Activated B cell treated with CpG ODN at 0.5 μM for 24 hours (primary cell): ENCODE measurements at regions of chr9 and their contacts with region 1.

Region 1: DNA sequence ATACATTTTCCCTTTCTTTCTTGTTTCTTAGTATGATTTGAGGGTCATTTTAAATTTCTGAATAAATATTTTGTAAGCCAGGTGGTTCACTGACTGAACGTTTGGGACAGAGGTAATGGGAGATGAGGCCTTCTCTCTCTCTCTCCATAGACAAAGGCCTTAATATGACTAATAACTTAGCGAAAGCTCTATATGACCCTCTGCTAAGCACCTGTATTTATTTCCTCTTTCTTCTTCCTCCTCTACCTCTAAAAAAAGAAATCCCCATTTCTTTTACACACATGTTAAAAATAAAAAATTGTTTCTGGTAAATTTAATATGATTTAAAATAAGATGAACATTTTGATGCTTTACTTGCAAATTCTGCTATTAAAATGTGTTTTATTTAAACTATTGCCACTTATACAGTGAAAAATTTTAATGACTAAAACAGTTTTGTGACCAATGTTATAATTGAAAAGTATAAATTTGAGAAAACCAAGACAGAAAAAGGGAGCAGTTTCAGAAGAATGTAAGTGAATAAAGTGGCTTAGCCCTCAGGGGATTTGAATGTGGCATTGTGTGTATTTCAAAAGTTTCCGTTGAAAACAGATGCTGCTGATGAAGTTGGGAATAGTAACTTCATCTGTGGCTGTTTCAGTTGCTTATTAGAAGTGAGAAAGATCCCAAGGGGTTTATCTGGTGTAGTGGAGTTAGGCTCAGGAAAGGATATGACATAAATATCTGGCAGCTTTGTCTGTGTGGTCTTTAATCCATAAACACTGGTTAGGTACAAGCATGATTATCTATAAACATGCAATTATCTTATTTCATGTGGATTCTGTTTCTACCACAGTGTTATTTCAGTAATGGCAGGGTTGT is 128.6 kb upstream of the GRHPR start:
- DNase-seq: no peak
- ATAC-seq: peak; percentile 69
- H3K4me3 Mint-ChIP-seq: peak overlapping the region; percentile 67
- H3K27ac Mint-ChIP-seq: peak overlapping the region; percentile 97
- H3K4me1 Mint-ChIP-seq: peaks cover 95% of the 10 kb centered on the region
- H3K27me3 Mint-ChIP-seq: no peaks in the 10 kb centered on the region
- CTCF ChIP-seq: no peak

Region 2: DNA sequence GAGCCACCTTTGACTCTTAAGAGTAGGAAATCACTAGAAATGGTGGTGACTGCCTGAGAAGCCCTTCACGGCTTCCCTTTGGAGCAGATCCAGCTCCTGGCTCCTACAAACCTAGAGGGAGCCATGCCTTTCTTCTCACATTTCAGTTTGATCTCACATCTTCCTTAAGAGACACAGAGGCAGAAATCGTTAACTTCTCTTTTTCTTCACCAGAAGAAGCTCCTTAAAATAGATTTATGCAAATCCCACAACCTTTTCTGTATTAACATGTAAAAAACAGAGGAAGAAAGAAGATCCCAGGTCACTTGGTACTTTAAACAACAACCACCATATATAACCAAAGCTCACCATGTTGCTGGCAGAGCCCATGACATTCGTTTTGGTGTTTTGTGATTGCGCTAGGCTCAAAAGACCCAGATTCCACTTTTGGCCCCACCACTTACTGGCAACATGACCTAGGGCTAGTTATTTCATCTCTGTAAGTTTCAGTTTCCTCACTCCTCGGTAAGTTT is 289.4 kb before region 1 on chr9:
- CTCF ChIA-PET with region 1: no interaction called
- POLR2A ChIA-PET with region 1: interaction called, 10 read pairs
- intact Hi-C with region 1: no loop called
- DNase-seq: no peak
- ATAC-seq: peak; percentile 37
- H3K4me3 Mint-ChIP-seq: peak overlapping the region; percentile 86
- H3K27ac Mint-ChIP-seq: peak overlapping the region; percentile 84
- H3K4me1 Mint-ChIP-seq: peaks cover 94% of the 10 kb centered on the region
- H3K27me3 Mint-ChIP-seq: no peaks in the 10 kb centered on the region
- CTCF ChIP-seq: no peak

Region 3: DNA sequence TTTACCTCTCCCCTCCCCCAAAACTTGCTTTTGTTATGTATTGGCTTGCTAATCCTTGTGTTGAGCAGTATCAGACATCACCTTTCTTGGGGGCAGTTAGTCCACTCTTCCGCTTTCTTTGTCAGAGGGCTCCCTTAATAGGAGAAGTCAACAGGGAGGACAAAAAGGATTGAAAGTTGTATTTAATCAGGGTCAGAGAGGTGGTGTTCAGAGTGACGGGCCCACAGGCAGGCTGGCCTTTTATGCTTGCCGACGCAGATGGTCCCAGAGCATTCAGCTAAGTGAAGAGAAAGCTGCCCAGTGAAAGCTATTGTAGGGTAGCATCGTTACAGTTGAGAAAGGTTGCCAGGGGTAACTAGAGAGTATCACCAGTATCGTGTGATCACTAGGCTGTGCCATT is 42.4 kb before region 1 on chr9:
- CTCF ChIA-PET with region 1: no interaction called
- POLR2A ChIA-PET with region 1: interaction called, 10 read pairs
- intact Hi-C with region 1: no loop called
- DNase-seq: peak; percentile 31
- ATAC-seq: peak; percentile 93
- H3K4me3 Mint-ChIP-seq: peak overlapping the region; percentile 45
- H3K27ac Mint-ChIP-seq: peak overlapping the region; percentile 94
- H3K4me1 Mint-ChIP-seq: peaks cover 68% of the 10 kb centered on the region
- H3K27me3 Mint-ChIP-seq: no peaks in the 10 kb centered on the region
- CTCF ChIP-seq: no peak

Region 4: DNA sequence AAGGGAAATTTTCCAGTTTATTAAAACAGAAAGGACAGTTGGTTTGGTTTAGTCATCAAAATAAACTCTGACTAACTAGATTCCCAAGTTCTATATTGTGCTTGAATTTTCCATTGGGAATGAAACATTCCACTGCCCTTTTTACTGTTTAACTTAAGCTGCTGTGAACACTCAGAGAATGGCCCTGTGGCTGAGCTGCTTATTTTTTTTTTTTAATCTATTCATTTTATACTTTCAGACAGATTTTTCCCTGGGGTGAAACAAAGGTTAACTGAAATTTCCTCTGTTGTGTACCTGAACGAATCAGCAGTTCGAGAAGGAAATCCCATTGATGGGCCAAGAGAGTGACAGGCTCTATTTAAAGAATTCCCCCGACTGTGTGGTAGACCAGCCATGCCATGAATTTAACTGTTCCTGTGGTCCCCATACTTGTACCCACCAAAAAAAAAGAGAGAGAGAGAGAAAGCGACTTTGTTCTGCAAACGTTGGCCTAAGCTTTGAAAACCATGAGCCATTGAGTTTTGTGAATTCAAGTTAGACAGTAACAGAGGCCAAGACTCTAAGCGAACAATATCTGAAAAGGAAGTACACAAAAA is 10.1 kb before region 1 on chr9:
- CTCF ChIA-PET with region 1: no interaction called
- POLR2A ChIA-PET with region 1: interaction called, 8 read pairs
- intact Hi-C with region 1: loop called (anchors 1 kb)
- DNase-seq: no peak
- ATAC-seq: peak; percentile 62
- H3K4me3 Mint-ChIP-seq: peak overlapping the region; percentile 60
- H3K27ac Mint-ChIP-seq: peak overlapping the region; percentile 88
- H3K4me1 Mint-ChIP-seq: peaks cover 68% of the 10 kb centered on the region
- H3K27me3 Mint-ChIP-seq: no peaks in the 10 kb centered on the region
- CTCF ChIP-seq: no peak

Region 5: GRCh38 chr9:37324261-37324683 is 30.4 kb after region 1 on chr9:
- CTCF ChIA-PET with region 1: no interaction called
- POLR2A ChIA-PET with region 1: interaction called, 11 read pairs
- intact Hi-C with region 1: loop called (anchors 1 kb)
- DNase-seq: peak; percentile 42
- ATAC-seq: peak; percentile 86
- H3K4me3 Mint-ChIP-seq: peak overlapping the region; percentile 59
- H3K27ac Mint-ChIP-seq: peak overlapping the region; percentile 99
- H3K4me1 Mint-ChIP-seq: peaks cover 69% of the 10 kb centered on the region
- H3K27me3 Mint-ChIP-seq: no peaks in the 10 kb centered on the region
- CTCF ChIP-seq: no peak

Region 6: GRCh38 chr9:37753489-37754190 is 459.7 kb after region 1 on chr9 and contains the start of gene TRMT10B:
- CTCF ChIA-PET with region 1: no interaction called
- POLR2A ChIA-PET with region 1: no interaction called
- intact Hi-C with region 1: no loop called
- DNase-seq: peak; percentile 62
- ATAC-seq: peak; percentile 92
- H3K4me3 Mint-ChIP-seq: peak within 1 kb of the TSS; percentile 96
- H3K27ac Mint-ChIP-seq: peak within 1 kb of the TSS; percentile 89
- H3K4me1 Mint-ChIP-seq: peaks cover 22% of the 10 kb centered on the region
- H3K27me3 Mint-ChIP-seq: no peaks in the 10 kb centered on the region
- CTCF ChIP-seq: no peak
- total RNA-seq, gene TRMT10B: 11.7 and 15.0 TPM in 2 replicates